Activated CD4-positive, alpha-beta memory T cell treated with anti-CD3 and anti-CD28 coated beads for 36 hours (primary cell): ENCODE measurements at regions of chr12 and their contacts with region 1.

Region 1: GRCh38 chr12:52050761-52051541 is at the start of gene NR4A1:
- DNase-seq: peak; percentile 99
- H3K4me3 Mint-ChIP-seq: peak within 1 kb of the TSS; percentile 88
- H3K27ac Mint-ChIP-seq: peak within 1 kb of the TSS; percentile 91
- H3K4me1 Mint-ChIP-seq: peaks cover 27% of the 10 kb centered on the region
- H3K27me3 Mint-ChIP-seq: no peaks in the 10 kb centered on the region
- total RNA-seq, gene NR4A1: 64.2 to 68.2 TPM

Region 2: DNA sequence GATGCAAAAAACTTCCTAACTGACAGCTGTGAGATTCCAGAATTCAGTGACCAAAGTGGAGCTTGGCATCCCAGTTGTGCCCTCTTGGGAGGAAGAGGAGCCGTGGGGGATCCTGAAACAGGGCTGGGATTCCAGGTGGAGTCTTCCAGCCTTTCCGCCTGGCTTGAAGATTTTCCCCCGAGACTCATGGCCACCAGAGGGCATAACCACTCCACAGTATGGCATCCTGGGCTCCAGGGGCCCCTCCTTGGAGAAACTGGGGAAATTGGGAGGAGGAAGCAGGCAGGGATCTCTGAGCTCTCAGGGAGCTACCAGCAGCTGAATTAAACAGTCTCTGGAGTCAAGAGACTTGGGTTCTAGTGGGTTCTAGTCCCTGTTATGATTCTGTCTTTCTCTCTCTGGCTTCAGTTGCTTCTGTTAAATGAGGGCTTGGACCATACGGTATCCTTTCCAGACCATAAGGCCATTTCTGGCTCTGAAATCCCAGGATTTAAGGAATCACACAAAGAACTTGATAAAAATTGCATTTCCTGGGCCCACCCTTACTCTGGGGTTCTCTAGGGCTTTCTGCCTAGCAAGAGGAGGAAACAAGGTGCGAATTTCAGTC is 46.8 kb before region 1 on chr12:
- CTCF ChIA-PET with region 1: no interaction called
- POLR2A ChIA-PET with region 1: interaction called, 3 read pairs
- intact Hi-C with region 1: loop called (anchors 1 kb)
- DNase-seq: peak; percentile 36
- H3K4me3 Mint-ChIP-seq: no peak overlapping the region
- H3K27ac Mint-ChIP-seq: no peak overlapping the region
- H3K4me1 Mint-ChIP-seq: peaks cover 17% of the 10 kb centered on the region
- H3K27me3 Mint-ChIP-seq: peaks cover 2% of the 10 kb centered on the region

Region 3: DNA sequence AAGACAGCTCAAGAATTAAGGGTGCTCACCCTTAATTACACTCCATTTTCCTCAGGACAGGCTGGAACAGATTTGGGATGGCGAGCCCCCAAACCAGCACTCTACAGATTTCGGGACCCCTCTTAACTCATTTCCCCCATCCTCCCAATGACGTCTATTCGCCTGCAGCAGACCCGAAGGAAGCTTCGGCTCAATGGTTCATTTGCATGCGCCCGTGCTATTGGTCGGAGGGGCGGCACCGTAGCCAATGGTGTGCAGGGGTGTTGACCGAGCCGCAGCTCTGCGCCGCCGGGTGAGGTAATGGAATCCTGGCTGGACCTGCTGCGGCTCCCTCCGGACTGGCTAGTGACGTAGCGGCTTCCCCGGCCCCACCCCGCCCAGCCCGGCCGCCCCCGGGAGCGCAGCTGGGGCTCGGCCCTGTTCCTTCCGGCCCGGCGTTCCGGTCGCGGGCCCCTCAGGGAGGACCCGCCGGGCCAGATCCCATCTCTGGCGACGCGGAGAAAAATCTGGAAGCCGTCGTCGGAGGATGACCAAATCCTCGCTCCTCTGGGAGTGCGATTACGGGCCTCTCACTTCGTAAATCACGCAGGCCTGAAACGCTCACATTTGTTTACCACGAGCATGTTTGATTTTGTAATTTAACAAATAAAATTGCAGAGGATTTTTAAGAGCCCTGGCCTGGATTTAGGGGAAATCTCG is 18.0 kb before region 1 on chr12:
- CTCF ChIA-PET with region 1: interaction called, 261 read pairs
- POLR2A ChIA-PET with region 1: interaction called, 26 read pairs
- intact Hi-C with region 1: loop called (anchors 1 kb)
- DNase-seq: peak; percentile 96
- H3K4me3 Mint-ChIP-seq: peak overlapping the region; percentile 71
- H3K27ac Mint-ChIP-seq: peak overlapping the region; percentile 70
- H3K4me1 Mint-ChIP-seq: peaks cover 37% of the 10 kb centered on the region
- H3K27me3 Mint-ChIP-seq: no peaks in the 10 kb centered on the region